ENCODE measurements at regions of chr11 and their contacts with region 1.

Region 1: GRCh38 chr11:76190376-76190775 is 15.9 kb downstream of the WNT11 start:
- DNase-seq: no peak
- H3K4me3 ChIP-seq: no peak overlapping the region
- H3K27ac ChIP-seq: no peak overlapping the region
- H3K4me1 ChIP-seq: peaks cover 2% of the 10 kb centered on the region
- H3K27me3 ChIP-seq: no peaks in the 10 kb centered on the region
- CTCF ChIP-seq: no peak
- POLR2A ChIP-seq: no peak

Region 2: GRCh38 chr11:75147875-75148263 is 1042.5 kb before region 1 on chr11:
- intact Hi-C with region 1: loop called (anchors 5 kb)
- DNase-seq: no peak
- H3K4me3 ChIP-seq: no peak overlapping the region
- H3K27ac ChIP-seq: no peak overlapping the region
- H3K4me1 ChIP-seq: peaks cover 8% of the 10 kb centered on the region
- H3K27me3 ChIP-seq: no peaks in the 10 kb centered on the region
- CTCF ChIP-seq: no peak
- POLR2A ChIP-seq: no peak

Region 3: GRCh38 chr11:76086743-76087635 is 103.4 kb before region 1 on chr11:
- intact Hi-C with region 1: no loop called
- DNase-seq: no peak
- H3K4me3 ChIP-seq: no peak overlapping the region
- H3K27ac ChIP-seq: no peak overlapping the region
- H3K4me1 ChIP-seq: peaks cover 9% of the 10 kb centered on the region
- H3K27me3 ChIP-seq: no peaks in the 10 kb centered on the region
- CTCF ChIP-seq: no peak
- POLR2A ChIP-seq: no peak

Measured in vagina (tissue), 2 donors.